ENCODE measurements at regions of chr5 and their contacts with region 1.

Region 1: DNA sequence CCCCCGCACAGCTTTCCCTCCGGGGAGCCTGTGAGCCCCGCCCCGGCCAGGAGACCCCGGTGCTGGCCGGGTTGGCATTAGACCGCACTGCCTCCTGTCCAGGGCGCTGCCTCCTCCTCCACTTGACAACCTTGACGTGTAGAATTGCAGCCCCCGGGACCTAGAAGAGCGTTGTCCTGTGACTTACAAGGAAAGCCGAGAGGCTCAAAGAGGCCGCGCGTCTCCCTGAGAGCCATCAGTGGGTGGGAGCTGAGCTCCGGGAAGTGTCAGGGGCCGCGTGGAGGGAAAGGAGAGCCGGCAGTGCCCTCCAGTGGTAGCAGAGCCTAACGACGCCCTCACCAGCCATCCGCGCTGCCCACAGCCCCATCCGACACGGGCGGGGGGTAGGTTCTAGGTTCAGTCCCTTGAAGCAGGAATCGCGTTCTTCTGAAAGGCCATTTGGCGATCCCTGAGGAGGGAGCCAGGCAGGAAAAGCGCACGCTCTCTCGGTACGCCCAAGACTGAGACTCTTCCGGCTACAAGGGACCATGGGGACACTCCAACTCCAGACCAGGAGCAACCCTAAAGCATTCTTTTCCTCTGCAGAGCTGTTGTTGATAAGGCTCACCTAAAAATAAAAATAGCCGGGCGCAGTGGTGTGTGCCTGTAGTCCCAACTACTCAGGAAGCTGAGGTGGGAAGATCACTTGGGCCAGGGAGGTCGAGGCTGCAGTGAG is 40.6 kb upstream of the SAP30L start:
- DNase-seq: peak; percentile 85
- H3K4me3 Mint-ChIP-seq: peak overlapping the region; percentile 51
- H3K27ac Mint-ChIP-seq: no peak overlapping the region
- H3K4me1 Mint-ChIP-seq: peaks cover 7% of the 10 kb centered on the region
- H3K27me3 Mint-ChIP-seq: no peaks in the 10 kb centered on the region
- CTCF ChIP-seq: peak; percentile 98

Region 2: DNA sequence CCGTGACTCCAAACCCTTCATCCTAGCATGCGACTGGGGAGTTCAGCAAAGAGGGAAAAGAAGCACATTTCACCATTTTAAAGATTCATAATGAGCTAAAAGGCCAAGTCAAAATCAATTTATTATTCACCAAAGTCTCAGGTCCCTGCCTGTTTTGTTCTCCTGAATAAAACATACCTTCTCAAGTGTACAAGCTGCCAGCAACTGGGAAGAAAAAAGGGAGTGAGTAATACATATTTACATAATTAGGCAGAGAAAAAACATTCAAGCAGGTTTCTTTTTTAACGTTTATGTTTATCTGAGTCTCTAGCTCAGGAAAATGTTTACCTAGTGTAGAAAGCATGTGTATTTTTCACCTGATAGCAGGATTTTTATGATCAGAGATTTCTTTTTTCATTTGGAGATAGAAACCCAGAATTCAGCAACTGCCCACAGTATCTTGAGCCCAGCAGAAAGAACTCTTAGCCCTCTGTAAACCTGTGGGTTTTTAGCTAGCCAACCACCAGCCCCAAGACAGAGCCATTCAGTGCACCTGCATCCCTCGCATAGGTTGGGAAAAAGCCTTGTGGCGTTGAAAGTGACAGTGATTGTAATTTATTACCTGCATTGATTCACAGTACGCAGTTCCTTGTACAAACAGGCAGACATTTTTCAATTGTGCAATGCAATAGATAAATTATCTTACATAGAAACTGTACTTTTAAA is 1032.7 kb before region 1 on chr5:
- CTCF ChIA-PET with region 1: no interaction called
- POLR2A ChIA-PET with region 1: no interaction called
- intact Hi-C with region 1: no loop called
- DNase-seq: no peak
- H3K4me3 Mint-ChIP-seq: no peak overlapping the region
- H3K27ac Mint-ChIP-seq: no peak overlapping the region
- H3K4me1 Mint-ChIP-seq: no peaks in the 10 kb centered on the region
- H3K27me3 Mint-ChIP-seq: no peaks in the 10 kb centered on the region
- CTCF ChIP-seq: no peak

Region 3: DNA sequence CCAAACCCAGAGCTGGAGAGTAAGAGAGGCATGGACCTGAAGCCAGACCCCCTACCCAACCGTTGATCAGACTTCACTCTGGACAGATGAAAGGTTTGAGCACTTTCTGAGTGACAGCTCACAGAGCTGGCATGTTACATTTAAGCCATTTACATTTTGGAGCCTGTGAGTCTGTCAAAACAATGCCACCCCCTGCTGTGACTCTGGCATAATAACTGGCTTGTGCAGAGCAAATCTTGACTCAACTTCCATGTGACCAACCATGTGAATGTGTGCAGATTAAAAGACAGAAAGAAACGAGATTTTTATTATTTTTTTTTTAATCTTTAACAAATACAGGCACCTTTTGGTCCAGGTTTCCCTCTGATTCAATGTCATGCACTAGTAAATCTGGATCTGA is 318.0 kb before region 1 on chr5:
- CTCF ChIA-PET with region 1: interaction called, 14 read pairs
- POLR2A ChIA-PET with region 1: no interaction called
- intact Hi-C with region 1: no loop called
- DNase-seq: peak; percentile 90
- H3K4me3 Mint-ChIP-seq: no peak overlapping the region
- H3K27ac Mint-ChIP-seq: no peak overlapping the region
- H3K4me1 Mint-ChIP-seq: peaks cover 13% of the 10 kb centered on the region
- H3K27me3 Mint-ChIP-seq: peaks cover 20% of the 10 kb centered on the region
- CTCF ChIP-seq: no peak

Region 4: DNA sequence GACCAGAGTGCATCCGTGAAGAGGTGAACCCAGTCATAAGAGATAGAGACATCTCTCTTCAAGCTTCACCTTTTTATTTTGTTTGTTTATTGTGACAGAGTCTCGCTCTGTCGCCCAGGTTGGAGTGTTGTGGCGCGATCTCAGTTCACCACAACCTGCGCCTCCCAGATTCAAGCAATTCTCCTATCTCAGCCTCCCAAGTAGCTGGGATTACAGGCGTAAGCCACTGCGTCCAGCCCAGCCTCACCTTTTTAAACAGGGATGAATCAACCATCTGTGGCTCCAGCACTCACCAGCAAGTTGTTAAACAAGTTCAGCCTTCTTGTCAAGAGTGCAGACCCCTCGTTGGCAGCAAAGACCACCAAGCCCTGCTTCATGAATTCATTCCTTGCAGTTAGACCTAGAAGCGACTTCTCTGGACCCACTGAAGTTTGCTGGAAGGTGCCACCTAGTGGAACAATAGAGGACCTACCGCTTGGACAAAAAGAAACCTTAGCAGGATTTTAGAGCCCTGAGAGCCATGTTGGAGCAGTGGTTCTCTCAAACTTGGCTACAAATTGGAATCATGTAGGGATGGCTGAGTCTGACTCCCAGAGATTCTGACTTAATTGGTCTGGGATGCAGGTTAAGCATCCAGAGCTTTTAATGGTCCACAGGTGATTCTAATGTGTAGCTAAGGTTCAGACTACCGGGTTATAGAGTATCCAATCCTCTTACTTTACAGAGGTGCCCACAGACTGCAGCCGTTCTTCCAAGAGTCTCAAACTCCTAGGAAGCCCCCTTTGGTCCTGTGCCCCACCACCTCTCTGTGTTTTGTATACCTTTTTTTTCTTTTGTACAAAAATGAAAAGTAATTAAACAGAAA is 225.2 kb before region 1 on chr5:
- CTCF ChIA-PET with region 1: interaction called, 125 read pairs
- POLR2A ChIA-PET with region 1: no interaction called
- intact Hi-C with region 1: loop called (anchors 1 kb)
- DNase-seq: peak; percentile 81
- H3K4me3 Mint-ChIP-seq: no peak overlapping the region
- H3K27ac Mint-ChIP-seq: no peak overlapping the region
- H3K4me1 Mint-ChIP-seq: peaks cover 9% of the 10 kb centered on the region
- H3K27me3 Mint-ChIP-seq: peaks cover 41% of the 10 kb centered on the region
- CTCF ChIP-seq: peak; percentile 88

Region 5: DNA sequence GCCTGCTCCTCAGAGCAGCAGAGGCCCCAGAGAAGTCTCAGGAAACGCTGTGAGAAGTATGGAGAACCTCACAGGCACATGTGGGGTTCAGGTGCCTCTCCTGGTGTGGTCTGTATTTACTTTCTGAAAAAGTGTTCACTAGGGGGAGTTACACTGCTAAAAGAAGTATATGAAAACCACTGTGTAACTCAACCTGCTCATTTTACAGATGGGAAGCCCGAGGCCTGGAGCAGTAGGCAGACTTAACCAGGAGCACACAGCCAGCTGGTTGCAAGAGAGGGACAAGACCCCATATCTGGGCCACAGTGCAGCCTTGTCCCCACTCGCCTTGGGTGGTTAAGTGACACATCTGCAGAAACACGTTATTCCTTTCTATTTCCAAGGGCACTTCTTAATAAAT is 72.2 kb before region 1 on chr5:
- CTCF ChIA-PET with region 1: interaction called, 4 read pairs
- POLR2A ChIA-PET with region 1: no interaction called
- intact Hi-C with region 1: loop called (anchors 2 kb)
- DNase-seq: peak; percentile 11
- H3K4me3 Mint-ChIP-seq: no peak overlapping the region
- H3K27ac Mint-ChIP-seq: no peak overlapping the region
- H3K4me1 Mint-ChIP-seq: no peaks in the 10 kb centered on the region
- H3K27me3 Mint-ChIP-seq: no peaks in the 10 kb centered on the region
- CTCF ChIP-seq: no peak

Region 6: DNA sequence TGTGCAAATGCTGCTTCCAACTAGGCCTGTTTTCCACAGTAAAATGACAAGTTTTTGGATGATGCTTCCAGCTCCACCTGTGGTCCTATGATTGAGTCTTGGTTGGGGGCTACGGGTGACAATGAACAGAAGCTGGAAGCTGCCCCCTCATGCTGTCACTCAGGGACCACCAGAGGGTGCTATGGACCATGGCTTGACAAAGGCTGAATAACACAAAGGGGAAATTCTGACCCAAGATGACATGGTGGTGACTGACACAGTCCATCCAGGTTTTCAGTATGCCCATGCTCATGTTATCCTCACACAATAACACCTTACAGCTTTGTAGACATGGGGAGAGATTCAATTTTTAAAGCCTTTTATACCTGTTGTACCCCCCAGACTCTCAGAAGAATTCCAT is 16.6 kb after region 1 on chr5:
- CTCF ChIA-PET with region 1: interaction called, 65 read pairs
- POLR2A ChIA-PET with region 1: interaction called, 8 read pairs
- intact Hi-C with region 1: no loop called
- DNase-seq: peak; percentile 45
- H3K4me3 Mint-ChIP-seq: no peak overlapping the region
- H3K27ac Mint-ChIP-seq: no peak overlapping the region
- H3K4me1 Mint-ChIP-seq: no peaks in the 10 kb centered on the region
- H3K27me3 Mint-ChIP-seq: no peaks in the 10 kb centered on the region
- CTCF ChIP-seq: peak; percentile 24

Region 7: DNA sequence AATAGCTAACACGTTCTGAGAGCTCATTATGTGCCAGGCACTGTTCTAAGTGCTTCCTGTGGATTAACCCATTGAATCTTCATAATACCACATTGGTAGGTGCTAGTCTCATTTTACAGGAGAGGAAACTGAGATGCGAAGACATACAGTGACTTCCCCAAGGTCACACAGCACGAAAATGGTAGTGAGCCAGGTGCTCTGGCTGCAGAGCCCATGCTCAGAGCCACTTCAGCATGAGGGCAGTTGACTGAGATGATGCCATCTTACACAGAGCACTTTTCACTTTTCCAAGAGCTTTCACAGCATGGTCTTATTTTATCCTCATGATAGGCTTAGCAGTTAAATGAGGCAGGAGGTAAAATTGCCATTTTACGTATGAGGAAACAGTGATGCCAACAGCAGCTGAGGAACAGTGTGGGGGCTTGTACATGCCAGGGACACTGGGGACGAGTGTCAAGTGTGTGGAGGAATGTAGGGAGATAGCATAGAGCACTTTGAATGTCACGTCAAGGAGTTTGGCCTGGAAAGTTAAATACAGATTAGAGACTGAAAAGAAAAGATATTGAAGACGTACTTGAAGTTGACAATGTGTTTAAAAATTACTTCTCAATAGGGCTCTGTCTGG is 788.4 kb after region 1 on chr5:
- CTCF ChIA-PET with region 1: no interaction called
- POLR2A ChIA-PET with region 1: no interaction called
- intact Hi-C with region 1: no loop called
- DNase-seq: no peak
- H3K4me3 Mint-ChIP-seq: no peak overlapping the region
- H3K27ac Mint-ChIP-seq: no peak overlapping the region
- H3K4me1 Mint-ChIP-seq: peaks cover 13% of the 10 kb centered on the region
- H3K27me3 Mint-ChIP-seq: no peaks in the 10 kb centered on the region
- CTCF ChIP-seq: no peak

Measured in MCF 10A (cell line).